Activated T-helper 1 cell treated with anti-CD3 and anti-CD28 coated beads, Interleukin-12 subunit alpha, Interleukin-12 subunit beta, Interleukin-2, Interleukin-4 antibody, amounts not matched to agents 30 ng/mL and 10 ng/mL and 1 ng/mL, durations not matched to agents 14 hours and 24 hours and 36 hours (primary cell): ENCODE measurements at regions of chr11 and their contacts with region 1.

Region 1: DNA sequence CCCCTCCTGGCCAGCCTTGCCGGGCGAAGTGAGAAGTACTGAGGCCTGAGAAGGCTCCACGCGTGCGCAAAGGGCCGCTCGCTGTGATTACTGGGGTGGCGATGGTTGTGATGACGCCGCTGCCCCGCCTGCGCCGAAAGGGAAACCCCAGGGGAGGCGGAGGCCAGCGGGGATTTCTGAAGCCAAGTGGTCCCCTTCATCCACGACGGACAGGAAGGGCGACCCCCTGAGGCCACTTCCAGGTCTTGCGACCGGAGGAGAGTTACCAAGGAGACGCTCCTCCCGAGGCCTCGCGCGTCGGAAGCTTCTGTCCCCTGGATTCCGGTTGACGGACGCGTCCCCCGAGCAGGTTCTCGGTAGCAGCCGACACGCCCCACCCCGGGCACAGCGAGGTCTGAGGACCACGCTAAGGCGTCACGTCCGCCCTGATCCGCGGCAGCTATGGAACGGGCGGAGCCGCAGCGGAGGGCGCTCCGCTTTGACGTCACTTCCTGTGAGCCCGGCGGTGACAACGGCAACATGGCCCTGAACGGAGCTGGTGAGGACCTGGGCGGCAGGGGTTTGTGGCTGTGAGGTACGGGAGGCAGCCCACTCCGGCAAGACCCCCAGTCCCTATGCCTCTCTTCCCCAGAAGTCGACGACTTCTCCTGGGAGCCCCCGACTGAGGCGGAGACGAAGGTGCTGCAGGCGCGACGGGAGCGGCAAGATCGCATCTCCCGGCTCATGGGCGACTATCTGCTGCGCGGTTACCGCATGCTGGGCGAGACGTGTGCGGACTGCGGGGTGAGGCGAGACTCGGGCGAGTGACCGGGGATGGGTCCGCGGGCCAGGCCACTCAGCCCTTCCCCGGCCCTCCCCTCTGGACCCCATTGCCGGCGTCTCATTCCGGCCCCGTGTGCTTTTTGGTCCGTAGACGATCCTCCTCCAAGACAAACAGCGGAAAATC is at the start of gene ZNRD2:
- DNase-seq: peak; percentile 99
- H3K4me3 Mint-ChIP-seq: peak within 1 kb of the TSS; percentile 99
- H3K27ac Mint-ChIP-seq: peak within 1 kb of the TSS; percentile 98
- H3K4me1 Mint-ChIP-seq: peaks cover 64% of the 10 kb centered on the region
- H3K27me3 Mint-ChIP-seq: no peaks in the 10 kb centered on the region
- total RNA-seq, gene ZNRD2: 94.6 and 96.9 TPM in 2 replicates

Region 2: GRCh38 chr11:65040847-65041621 is 529.2 kb before region 1 on chr11 and contains the start of gene SAC3D1:
- intact Hi-C with region 1: loop called (anchors 5 kb)
- DNase-seq: peak; percentile 90
- H3K4me3 Mint-ChIP-seq: peak within 1 kb of the TSS; percentile 90
- H3K27ac Mint-ChIP-seq: peak within 1 kb of the TSS; percentile 93
- H3K4me1 Mint-ChIP-seq: peaks cover 19% of the 10 kb centered on the region
- H3K27me3 Mint-ChIP-seq: no peaks in the 10 kb centered on the region
- total RNA-seq, gene SAC3D1: 17.4 and 17.7 TPM in 2 replicates

Region 3: GRCh38 chr11:65418711-65419459 is 151.4 kb before region 1 on chr11:
- intact Hi-C with region 1: loop called (anchors 2 kb)
- DNase-seq: peak; percentile 88
- H3K4me3 Mint-ChIP-seq: peak overlapping the region; percentile 99
- H3K27ac Mint-ChIP-seq: peak overlapping the region; percentile 100
- H3K4me1 Mint-ChIP-seq: peaks cover 57% of the 10 kb centered on the region
- H3K27me3 Mint-ChIP-seq: peaks cover 9% of the 10 kb centered on the region

Region 4: GRCh38 chr11:65530157-65530496 is 40.1 kb before region 1 on chr11:
- intact Hi-C with region 1: no loop called
- DNase-seq: no peak
- H3K4me3 Mint-ChIP-seq: no peak overlapping the region
- H3K27ac Mint-ChIP-seq: no peak overlapping the region
- H3K4me1 Mint-ChIP-seq: peaks cover 18% of the 10 kb centered on the region
- H3K27me3 Mint-ChIP-seq: no peaks in the 10 kb centered on the region

Region 5: GRCh38 chr11:65540297-65541092 is 29.8 kb before region 1 on chr11:
- intact Hi-C with region 1: loop called (anchors 1 kb)
- DNase-seq: peak; percentile 86
- H3K4me3 Mint-ChIP-seq: peak overlapping the region; percentile 85
- H3K27ac Mint-ChIP-seq: peak overlapping the region; percentile 88
- H3K4me1 Mint-ChIP-seq: peaks cover 28% of the 10 kb centered on the region
- H3K27me3 Mint-ChIP-seq: no peaks in the 10 kb centered on the region

Region 6: GRCh38 chr11:65606876-65607613 is 36.8 kb after region 1 on chr11:
- intact Hi-C with region 1: no loop called
- DNase-seq: no peak
- H3K4me3 Mint-ChIP-seq: no peak overlapping the region
- H3K27ac Mint-ChIP-seq: peak overlapping the region; percentile 34
- H3K4me1 Mint-ChIP-seq: peaks cover 29% of the 10 kb centered on the region
- H3K27me3 Mint-ChIP-seq: no peaks in the 10 kb centered on the region

Region 7: GRCh38 chr11:65652511-65653231 is 82.4 kb after region 1 on chr11:
- intact Hi-C with region 1: loop called (anchors 1 kb)
- DNase-seq: peak; percentile 95
- H3K4me3 Mint-ChIP-seq: peak overlapping the region; percentile 88
- H3K27ac Mint-ChIP-seq: peak overlapping the region; percentile 97
- H3K4me1 Mint-ChIP-seq: peaks cover 42% of the 10 kb centered on the region
- H3K27me3 Mint-ChIP-seq: peaks cover 3% of the 10 kb centered on the region